Natural killer cell (primary cell): ENCODE measurements at regions of chr19 and their contacts with region 1.

Region 1: DNA sequence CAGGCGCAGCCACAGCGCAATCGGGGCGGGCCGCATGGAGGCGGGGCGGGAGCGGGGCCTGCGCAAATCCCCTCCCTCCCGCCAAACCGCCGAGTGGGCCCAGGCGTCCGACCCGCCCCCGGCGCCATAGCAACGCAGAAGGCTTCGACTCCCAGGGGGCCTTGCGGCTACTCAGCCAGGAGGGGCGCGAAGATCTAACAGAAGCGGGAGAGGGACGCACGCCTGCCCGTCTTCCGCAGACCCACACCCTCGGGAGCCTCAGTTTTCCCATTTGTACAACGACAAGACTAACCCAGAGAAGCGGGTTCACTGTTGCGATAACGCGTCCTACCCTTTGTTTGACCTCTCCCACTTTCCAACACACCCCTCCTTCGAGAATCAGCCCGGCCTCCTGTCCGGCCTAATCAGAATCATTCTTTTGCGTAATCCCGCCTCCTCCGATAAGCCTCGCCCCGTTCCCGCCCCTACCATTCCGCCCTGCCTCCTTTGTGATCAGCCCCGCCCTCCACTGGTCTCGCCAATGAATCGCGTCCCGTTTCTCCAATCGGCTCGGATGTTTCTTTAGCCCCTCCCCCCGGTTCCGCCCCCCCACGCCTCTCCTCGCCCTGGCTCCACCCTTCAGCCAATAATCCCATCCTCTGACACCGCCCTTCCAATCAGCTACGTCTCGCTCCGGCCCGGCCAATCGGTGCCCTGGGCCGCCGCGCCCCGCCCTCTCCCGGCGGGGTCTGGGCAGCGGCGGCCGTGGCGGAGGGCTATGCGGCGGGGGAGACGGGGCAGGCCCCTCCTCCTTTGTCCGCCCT is at the start of gene PCSK4:
- DNase-seq: peak; percentile 97 to 99
- ATAC-seq: peak; percentile 83 to 92 (median 84)
- H3K4me3 ChIP-seq: peak within 1 kb of the TSS; percentile 56
- H3K4me3 Mint-ChIP-seq: peak within 1 kb of the TSS; percentile 87
- H3K27ac ChIP-seq: peak within 1 kb of the TSS; percentile 68
- H3K27ac Mint-ChIP-seq: peak within 1 kb of the TSS; percentile 80
- H3K4me1 ChIP-seq: peaks cover 18% of the 10 kb centered on the region
- H3K4me1 Mint-ChIP-seq: peaks cover 17 to 18% of the 10 kb centered on the region in 2 donors
- H3K27me3 ChIP-seq: no peaks in the 10 kb centered on the region
- H3K27me3 Mint-ChIP-seq: no peaks in the 10 kb centered on the region
- CTCF ChIP-seq: no peak
- total RNA-seq, gene PCSK4: 4.1 to 6.0 (median 5.3) TPM

Region 2: GRCh38 chr19:1275260-1275975 is 215.1 kb before region 1 on chr19 and contains the start of gene FAM174C:
- intact Hi-C with region 1: loop called (anchors 10 kb)
- DNase-seq: peak; percentile 94 to 98
- ATAC-seq: peak; percentile 82 to 95 (median 85)
- H3K4me3 ChIP-seq: peak within 1 kb of the TSS; percentile 65
- H3K4me3 Mint-ChIP-seq: peak within 1 kb of the TSS; percentile 83
- H3K27ac ChIP-seq: peak within 1 kb of the TSS; percentile 91
- H3K27ac Mint-ChIP-seq: peak within 1 kb of the TSS; percentile 91 to 93
- H3K4me1 ChIP-seq: peaks cover 65% of the 10 kb centered on the region
- H3K4me1 Mint-ChIP-seq: peaks cover 40 to 57% of the 10 kb centered on the region in 2 donors
- H3K27me3 ChIP-seq: no peaks in the 10 kb centered on the region
- H3K27me3 Mint-ChIP-seq: no peaks in the 10 kb centered on the region
- CTCF ChIP-seq: no peak
- total RNA-seq, gene FAM174C: 26.6 to 33.4 (median 27.1) TPM

Region 3: DNA sequence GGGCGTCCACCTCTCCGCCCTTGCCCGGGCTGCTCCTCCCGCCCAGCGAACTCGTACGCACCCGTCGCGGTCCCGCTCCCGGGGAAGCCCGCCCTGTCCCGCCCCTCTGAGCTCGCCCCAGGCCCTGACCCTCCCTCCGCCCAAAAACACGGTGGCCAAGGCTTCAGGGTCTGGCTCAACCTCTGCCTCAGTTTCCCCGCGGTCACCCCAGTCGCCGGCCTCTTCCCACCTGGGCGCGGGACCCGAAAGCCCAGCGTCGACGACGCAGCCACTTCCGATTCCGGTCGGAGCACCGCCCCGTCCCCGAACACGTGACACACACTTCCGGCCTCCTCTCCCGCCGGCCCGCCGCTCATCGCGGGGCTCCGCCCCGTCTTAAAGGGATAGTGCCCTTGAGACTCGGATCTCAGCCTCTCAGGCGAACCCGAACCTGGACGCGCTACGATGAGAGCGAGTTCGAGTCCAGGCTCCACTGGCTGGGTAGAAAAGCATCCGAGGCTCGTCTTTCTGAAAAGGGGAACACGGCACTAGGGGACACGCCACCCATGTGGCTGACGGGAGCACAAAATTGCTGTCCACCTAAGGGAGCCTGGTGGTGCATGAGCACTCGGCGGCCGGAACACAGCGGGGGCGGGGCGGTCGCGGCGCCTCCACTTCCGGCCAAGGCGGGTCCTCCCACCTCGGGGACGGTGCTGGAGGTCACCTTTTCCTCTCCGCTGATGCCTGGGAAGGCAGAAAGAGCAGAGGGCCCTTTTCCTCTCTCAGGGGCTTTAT is 11.4 kb before region 1 on chr19 and contains the start of gene C19orf25:
- intact Hi-C with region 1: loop called (anchors 1 kb)
- DNase-seq: peak; percentile 89 to 94
- ATAC-seq: peak; percentile 95 to 97 (median 97)
- H3K4me3 ChIP-seq: peak within 1 kb of the TSS; percentile 86
- H3K4me3 Mint-ChIP-seq: peak within 1 kb of the TSS; percentile 98
- H3K27ac ChIP-seq: peak within 1 kb of the TSS; percentile 85
- H3K27ac Mint-ChIP-seq: peak within 1 kb of the TSS; percentile 92 to 97
- H3K4me1 ChIP-seq: peaks cover 25% of the 10 kb centered on the region
- H3K4me1 Mint-ChIP-seq: peaks cover 9 to 25% of the 10 kb centered on the region in 2 donors
- H3K27me3 ChIP-seq: no peaks in the 10 kb centered on the region
- H3K27me3 Mint-ChIP-seq: no peaks in the 10 kb centered on the region
- CTCF ChIP-seq: no peak
- total RNA-seq, gene C19orf25: 30.2 to 42.2 (median 34.3) TPM

Region 4: GRCh38 chr19:1507763-1508509 is 17.4 kb after region 1 on chr19:
- intact Hi-C with region 1: loop called (anchors 1 kb)
- DNase-seq: peak; percentile 90 to 97
- ATAC-seq: peak; percentile 90 to 95 (median 91)
- H3K4me3 ChIP-seq: peak overlapping the region; percentile 40
- H3K4me3 Mint-ChIP-seq: peak overlapping the region; percentile 78
- H3K27ac ChIP-seq: peak overlapping the region; percentile 41
- H3K27ac Mint-ChIP-seq: peak overlapping the region; percentile 83 to 94
- H3K4me1 ChIP-seq: peaks cover 35% of the 10 kb centered on the region
- H3K4me1 Mint-ChIP-seq: peaks cover 10 to 20% of the 10 kb centered on the region in 2 donors
- H3K27me3 ChIP-seq: peaks cover 15% of the 10 kb centered on the region
- H3K27me3 Mint-ChIP-seq: peaks cover 15 to 30% of the 10 kb centered on the region in 2 donors
- CTCF ChIP-seq: no peak